Breast epithelium (tissue), 4 donors: ENCODE measurements at regions of chr17 and their contacts with region 1.

Region 1: GRCh38 chr17:33049781-33050414 is 58.3 kb downstream of the SPACA3 start:
- DNase-seq: no peak
- H3K4me3 ChIP-seq: no peak overlapping the region
- H3K27ac ChIP-seq: no peak overlapping the region
- H3K4me1 ChIP-seq: no peaks in the 10 kb centered on the region
- H3K27me3 ChIP-seq: no peaks in the 10 kb centered on the region
- CTCF ChIP-seq: peak in 1 of 3 donors; percentile 28
- POLR2A ChIP-seq: no peak

Region 2: DNA sequence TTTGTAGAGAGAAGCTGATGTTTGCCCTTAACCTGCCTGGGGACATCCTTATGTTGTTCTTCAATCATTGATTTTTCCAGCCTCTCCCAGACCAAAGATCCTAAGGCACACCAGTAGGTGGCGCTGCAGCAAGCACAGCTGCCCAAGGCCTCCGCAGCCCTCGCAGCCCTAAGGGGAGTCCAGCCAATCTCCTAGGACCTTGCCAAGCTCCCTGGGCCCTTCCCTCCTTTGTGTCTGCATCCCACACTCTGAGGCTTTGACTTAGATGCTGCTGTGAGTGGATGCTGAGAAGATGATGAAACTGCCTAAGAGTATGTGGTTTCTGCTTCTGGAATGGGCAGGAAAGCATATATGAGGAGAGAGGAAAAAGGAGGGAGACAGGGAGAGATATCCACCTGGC is 11.2 kb before region 1 on chr17:
- intact Hi-C with region 1: loop called (anchors 2 kb)
- DNase-seq: no peak
- H3K4me3 ChIP-seq: no peak overlapping the region
- H3K27ac ChIP-seq: no peak overlapping the region
- H3K4me1 ChIP-seq: no peaks in the 10 kb centered on the region
- H3K27me3 ChIP-seq: peaks cover 0 to 7% of the 10 kb centered on the region in 2 donors
- CTCF ChIP-seq: peak in 1 of 3 donors; percentile 24
- POLR2A ChIP-seq: no peak